ENCODE measurements at regions of chr10 and their contacts with region 1.

Region 1: GRCh38 chr10:132960631-132961419 is 18.5 kb upstream of the CFAP46 start:
- DNase-seq: no peak
- H3K4me3 Mint-ChIP-seq: no peak overlapping the region
- H3K27ac Mint-ChIP-seq: no peak overlapping the region
- H3K4me1 Mint-ChIP-seq: no peaks in the 10 kb centered on the region
- H3K27me3 Mint-ChIP-seq: peaks cover 9% of the 10 kb centered on the region
- CTCF ChIP-seq: no peak

Region 2: GRCh38 chr10:133110133-133110532 is 149.3 kb after region 1 on chr10:
- CTCF ChIA-PET with region 1: interaction called, 10 read pairs
- intact Hi-C with region 1: no loop called
- DNase-seq: peak; percentile 52
- H3K4me3 Mint-ChIP-seq: no peak overlapping the region
- H3K27ac Mint-ChIP-seq: no peak overlapping the region
- H3K4me1 Mint-ChIP-seq: peaks cover 17% of the 10 kb centered on the region
- H3K27me3 Mint-ChIP-seq: no peaks in the 10 kb centered on the region
- CTCF ChIP-seq: no peak